Sigmoid colon (tissue), 7 donors: ENCODE measurements at regions of chr9 and their contacts with region 1.

Region 1: GRCh38 chr9:35258676-35259474 is 97.1 kb downstream of the UNC13B start:
- DNase-seq: peak; percentile 81
- H3K4me3 ChIP-seq: no peak overlapping the region
- H3K27ac ChIP-seq: no peak overlapping the region
- H3K4me1 ChIP-seq: no peaks in the 10 kb centered on the region
- H3K27me3 ChIP-seq: no peaks in the 10 kb centered on the region
- CTCF ChIP-seq: peak; percentile 59 to 69 (median 64)
- EP300 ChIP-seq: no peak
- POLR2A ChIP-seq: no peak

Region 2: GRCh38 chr9:35161713-35162604 is 96.9 kb before region 1 on chr9 and contains the start of gene UNC13B:
- intact Hi-C with region 1: loop called (anchors 5 kb)
- DNase-seq: peak; percentile 97
- H3K4me3 ChIP-seq: peak within 1 kb of the TSS; percentile 66 to 91 (median 86)
- H3K27ac ChIP-seq: peak within 1 kb of the TSS; percentile 92 to 95 (median 94)
- H3K4me1 ChIP-seq: peaks cover 0 to 15% (median 13%) of the 10 kb centered on the region in 4 donors
- H3K27me3 ChIP-seq: no peaks in the 10 kb centered on the region
- CTCF ChIP-seq: no peak
- EP300 ChIP-seq: no peak
- POLR2A ChIP-seq: peak; percentile 61 to 74
- total RNA-seq, gene UNC13B: 14.6 to 22.2 (median 19.7) TPM

Region 3: GRCh38 chr9:35293378-35293964 is 34.6 kb after region 1 on chr9:
- intact Hi-C with region 1: no loop called
- DNase-seq: no peak
- H3K4me3 ChIP-seq: no peak overlapping the region
- H3K27ac ChIP-seq: no peak overlapping the region
- H3K4me1 ChIP-seq: no peaks in the 10 kb centered on the region
- H3K27me3 ChIP-seq: no peaks in the 10 kb centered on the region
- CTCF ChIP-seq: no peak
- EP300 ChIP-seq: no peak
- POLR2A ChIP-seq: no peak

Region 4: DNA sequence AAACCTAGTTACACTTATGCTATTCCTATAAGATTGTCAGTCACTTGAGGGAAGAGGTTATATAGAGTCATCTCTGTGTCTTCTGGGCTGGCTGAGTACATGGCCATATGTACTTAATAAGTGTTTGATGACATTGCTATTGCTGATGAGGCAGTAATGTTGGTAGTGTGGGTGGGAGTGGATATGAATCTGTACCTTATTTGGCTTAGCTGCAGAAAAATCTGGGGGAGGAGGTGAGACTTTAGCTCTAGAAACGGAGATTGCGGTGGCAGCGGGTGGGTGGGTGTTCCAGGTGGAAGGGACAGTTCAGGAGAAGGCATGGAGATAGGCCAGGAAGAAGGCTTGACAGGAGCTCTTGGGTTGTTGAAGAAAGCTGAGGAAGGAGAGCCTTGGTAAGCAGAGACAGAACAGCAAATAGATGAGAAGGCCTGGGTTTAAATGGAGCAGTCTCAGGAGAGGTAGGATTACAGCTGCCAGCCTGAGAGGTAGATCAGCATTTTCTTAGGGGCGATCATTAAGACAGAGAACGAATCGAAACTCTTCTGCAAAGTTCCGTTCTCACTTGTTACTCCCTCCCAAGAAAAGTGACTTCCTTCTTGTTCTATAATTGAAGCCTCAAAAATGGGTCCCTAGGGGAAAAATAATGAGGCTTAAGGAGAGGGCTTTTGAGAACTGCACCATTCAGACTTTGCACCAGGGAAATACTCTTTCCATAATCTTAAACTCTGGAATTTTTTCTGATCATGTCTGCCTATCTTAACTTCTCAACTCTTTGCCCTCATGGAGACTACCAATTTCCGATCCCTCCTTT is 63.4 kb after region 1 on chr9:
- intact Hi-C with region 1: no loop called
- DNase-seq: no peak
- H3K4me3 ChIP-seq: no peak overlapping the region
- H3K27ac ChIP-seq: no peak overlapping the region
- H3K4me1 ChIP-seq: no peaks in the 10 kb centered on the region
- H3K27me3 ChIP-seq: no peaks in the 10 kb centered on the region
- CTCF ChIP-seq: no peak
- EP300 ChIP-seq: no peak
- POLR2A ChIP-seq: no peak

Region 5: GRCh38 chr9:35341585-35341984 is 82.7 kb after region 1 on chr9:
- intact Hi-C with region 1: no loop called
- DNase-seq: peak; percentile 66
- H3K4me3 ChIP-seq: peak overlapping the region in 2 of 4 donors; percentile 5 to 11
- H3K27ac ChIP-seq: peak overlapping the region in 2 of 4 donors; percentile 36 to 44
- H3K4me1 ChIP-seq: peaks cover 0 to 17% (median 13%) of the 10 kb centered on the region in 4 donors
- H3K27me3 ChIP-seq: no peaks in the 10 kb centered on the region
- CTCF ChIP-seq: no peak
- EP300 ChIP-seq: no peak
- POLR2A ChIP-seq: no peak